ENCODE measurements at regions of chr19 and their contacts with region 1.

Region 1: DNA sequence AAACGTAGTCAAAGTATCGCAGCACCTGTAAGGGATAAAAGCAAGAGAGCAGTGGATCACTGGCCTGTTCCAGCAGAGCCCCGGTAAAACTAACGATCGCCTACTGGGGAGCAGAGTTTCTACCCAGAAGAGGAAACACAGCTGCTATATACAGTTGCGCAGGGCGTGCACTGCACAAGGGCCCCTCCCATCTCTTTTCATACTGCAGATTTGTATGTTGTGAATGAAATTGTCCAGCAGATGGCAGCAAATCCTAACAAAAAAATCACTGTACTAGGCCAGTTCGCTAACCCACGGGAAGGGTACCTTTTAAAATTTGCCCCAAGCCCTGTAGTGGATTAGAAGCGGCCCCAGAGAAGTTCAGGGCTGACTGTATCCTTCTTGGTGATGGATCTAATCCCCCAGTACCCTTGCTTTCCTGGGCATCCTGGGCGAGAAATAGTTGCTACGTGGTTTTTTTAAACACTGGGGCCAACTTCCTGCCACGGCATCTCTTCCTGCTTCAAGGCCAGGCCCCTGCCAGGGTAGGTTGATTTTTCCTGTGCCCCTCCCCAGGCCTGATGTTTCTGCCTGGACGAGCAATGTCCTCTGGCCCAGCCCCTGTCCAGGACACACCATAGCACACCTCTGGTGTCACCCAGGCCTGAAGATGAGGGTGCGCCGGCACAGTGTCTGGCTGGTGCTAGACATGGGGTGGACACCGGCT is 127.0 kb downstream of the IER2 start:
- DNase-seq: peak; percentile 71 to 78
- H3K4me3 ChIP-seq: no peak overlapping the region
- H3K4me1 ChIP-seq: no peaks in the 10 kb centered on the region
- H3K27me3 ChIP-seq: peaks cover 3% of the 10 kb centered on the region; the same call in 1 of the 2 replicates

Region 2: GRCh38 chr19:13315495-13315894 is 38.2 kb after region 1 on chr19:
- in situ Hi-C with region 1: no loop called
- DNase-seq: no peak
- H3K4me3 ChIP-seq: no peak overlapping the region
- H3K4me1 ChIP-seq: no peaks in the 10 kb centered on the region
- H3K27me3 ChIP-seq: no peaks in the 10 kb centered on the region

Region 3: GRCh38 chr19:13430790-13431582 is 153.7 kb after region 1 on chr19:
- in situ Hi-C with region 1: loop called (anchors 5 kb)
- DNase-seq: peak; percentile 14 to 68
- H3K4me3 ChIP-seq: no peak overlapping the region
- H3K4me1 ChIP-seq: no peaks in the 10 kb centered on the region
- H3K27me3 ChIP-seq: no peaks in the 10 kb centered on the region

Region 4: DNA sequence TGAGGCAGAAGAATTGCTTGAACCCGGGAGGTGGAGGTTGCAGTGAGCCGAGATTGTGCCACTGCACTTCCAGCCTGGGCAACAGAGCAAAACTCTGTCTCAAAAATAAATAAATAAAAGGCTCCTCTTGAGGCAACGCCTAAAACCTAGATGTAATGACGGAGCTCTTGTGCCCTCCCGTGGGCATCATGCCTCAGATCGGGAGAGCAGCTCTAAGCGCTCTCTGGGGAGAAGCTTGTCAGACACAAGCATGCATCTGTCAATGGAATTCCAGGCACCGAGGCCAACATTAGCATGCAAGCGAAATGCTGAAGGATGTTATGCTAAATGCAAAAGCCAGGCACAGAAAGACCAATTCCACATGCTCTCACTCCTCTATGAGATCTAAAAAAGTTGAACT is 441.5 kb after region 1 on chr19:
- in situ Hi-C with region 1: loop called (anchors 5 kb)
- DNase-seq: peak in 1 of 2 experiments; percentile 33
- H3K4me3 ChIP-seq: no peak overlapping the region
- H3K4me1 ChIP-seq: no peaks in the 10 kb centered on the region
- H3K27me3 ChIP-seq: peaks cover 6% of the 10 kb centered on the region